Mammary epithelial cell (primary cell): ENCODE measurements at regions of chr13 and their contacts with region 1.

Region 1: GRCh38 chr13:21060987-21061763 is at the start of gene LATS2:
- DNase-seq: peak; percentile 87
- H3K4me3 ChIP-seq: peak within 1 kb of the TSS; percentile 62 to 87 (median 77)
- H3K27ac ChIP-seq: peak within 1 kb of the TSS; percentile 80
- H3K4me1 ChIP-seq: peaks cover 7% of the 10 kb centered on the region
- H3K27me3 ChIP-seq: no peaks in the 10 kb centered on the region
- CTCF ChIP-seq: peak in 1 of 2 donors; percentile 23
- total RNA-seq, gene LATS2: 18.0 to 19.8 TPM

Region 2: DNA sequence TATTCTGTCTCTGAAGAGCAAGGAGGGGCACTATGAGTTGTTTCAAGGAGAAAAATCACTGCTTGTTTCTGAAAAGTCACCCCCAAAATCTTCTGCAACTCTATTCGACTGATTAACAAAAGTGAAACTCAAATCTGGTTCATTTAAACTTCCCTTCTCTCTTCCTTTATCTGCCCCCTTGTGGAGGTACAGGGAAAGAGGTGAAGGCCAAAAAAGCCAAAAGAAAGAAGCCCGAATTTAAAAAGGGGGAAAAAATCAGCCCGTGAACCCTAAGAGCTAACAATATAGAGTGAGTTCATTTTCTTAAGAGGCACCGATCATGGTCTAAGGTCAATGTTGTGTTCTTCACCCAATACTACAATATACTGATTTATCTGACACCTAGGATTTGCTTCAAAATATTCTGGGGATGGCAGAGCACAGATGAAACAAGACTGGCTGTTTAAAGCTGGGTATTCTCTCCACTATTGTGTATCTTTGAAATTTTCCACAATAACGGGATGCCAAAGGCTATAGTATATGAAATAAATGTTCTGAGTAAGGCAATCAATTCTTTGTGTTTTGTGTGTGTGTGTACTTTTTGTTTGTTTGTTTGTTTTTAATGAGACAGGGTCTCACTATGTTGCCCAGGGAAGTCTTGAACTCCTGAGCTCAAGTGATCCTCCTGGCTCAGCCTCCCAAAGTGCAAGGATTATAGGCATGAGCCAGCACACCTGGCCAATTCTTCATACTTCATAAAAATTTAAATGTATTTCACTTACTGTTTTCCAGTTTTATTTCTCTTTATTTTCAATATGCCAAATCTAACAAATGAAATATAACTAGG is 232.4 kb before region 1 on chr13:
- CTCF ChIA-PET with region 1: no interaction called
- dilution Hi-C with region 1: no loop called
- in situ Hi-C with region 1: no loop called
- intact Hi-C with region 1: no loop called
- DNase-seq: peak; percentile 45
- H3K4me3 ChIP-seq: peak overlapping the region; percentile 26 to 42 (median 33)
- H3K27ac ChIP-seq: peak overlapping the region; percentile 4
- H3K4me1 ChIP-seq: no peaks in the 10 kb centered on the region
- H3K27me3 ChIP-seq: no peaks in the 10 kb centered on the region
- CTCF ChIP-seq: peak; percentile 67 to 83

Region 3: GRCh38 chr13:21016487-21016886 is 44.7 kb before region 1 on chr13:
- CTCF ChIA-PET with region 1: no interaction called
- dilution Hi-C with region 1: no loop called
- in situ Hi-C with region 1: no loop called
- intact Hi-C with region 1: loop called (anchors 2 kb)
- DNase-seq: no peak
- H3K4me3 ChIP-seq: no peak overlapping the region
- H3K27ac ChIP-seq: peak overlapping the region; percentile 56
- H3K4me1 ChIP-seq: peaks cover 29% of the 10 kb centered on the region
- H3K27me3 ChIP-seq: no peaks in the 10 kb centered on the region
- CTCF ChIP-seq: no peak

Region 4: DNA sequence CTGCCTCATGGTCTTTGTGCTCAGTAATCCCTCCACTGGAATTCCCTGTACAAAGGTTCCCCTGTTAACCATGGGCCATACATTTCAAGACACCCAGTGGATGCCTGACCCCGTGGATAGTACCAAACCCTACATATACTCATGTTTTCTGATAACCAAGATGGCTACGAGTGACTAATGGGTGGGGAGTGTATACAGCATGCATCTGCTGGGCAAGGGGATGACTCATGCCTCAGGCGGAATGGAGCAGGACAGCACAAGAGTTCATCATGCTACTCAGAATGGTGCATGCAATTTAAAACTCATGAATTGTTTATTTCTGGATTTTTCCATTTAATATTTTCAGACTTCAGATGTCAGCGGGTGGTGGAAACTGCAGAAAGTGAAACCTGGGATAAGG is 596.4 kb after region 1 on chr13:
- CTCF ChIA-PET with region 1: no interaction called
- dilution Hi-C with region 1: no loop called
- in situ Hi-C with region 1: no loop called
- intact Hi-C with region 1: no loop called
- DNase-seq: peak; percentile 83
- H3K4me3 ChIP-seq: no peak overlapping the region
- H3K27ac ChIP-seq: no peak overlapping the region
- H3K4me1 ChIP-seq: peaks cover 9% of the 10 kb centered on the region
- H3K27me3 ChIP-seq: no peaks in the 10 kb centered on the region
- CTCF ChIP-seq: no peak

Region 5: GRCh38 chr13:21686751-21687391 is 625.7 kb after region 1 on chr13:
- CTCF ChIA-PET with region 1: no interaction called
- dilution Hi-C with region 1: no loop called
- in situ Hi-C with region 1: no loop called
- intact Hi-C with region 1: loop called (anchors 10 kb)
- DNase-seq: no peak
- H3K4me3 ChIP-seq: no peak overlapping the region
- H3K27ac ChIP-seq: no peak overlapping the region
- H3K4me1 ChIP-seq: peaks cover 37% of the 10 kb centered on the region
- H3K27me3 ChIP-seq: no peaks in the 10 kb centered on the region
- CTCF ChIP-seq: no peak